MCF 10A (cell line): ENCODE measurements at regions of chr20 and their contacts with region 1.

Region 1: DNA sequence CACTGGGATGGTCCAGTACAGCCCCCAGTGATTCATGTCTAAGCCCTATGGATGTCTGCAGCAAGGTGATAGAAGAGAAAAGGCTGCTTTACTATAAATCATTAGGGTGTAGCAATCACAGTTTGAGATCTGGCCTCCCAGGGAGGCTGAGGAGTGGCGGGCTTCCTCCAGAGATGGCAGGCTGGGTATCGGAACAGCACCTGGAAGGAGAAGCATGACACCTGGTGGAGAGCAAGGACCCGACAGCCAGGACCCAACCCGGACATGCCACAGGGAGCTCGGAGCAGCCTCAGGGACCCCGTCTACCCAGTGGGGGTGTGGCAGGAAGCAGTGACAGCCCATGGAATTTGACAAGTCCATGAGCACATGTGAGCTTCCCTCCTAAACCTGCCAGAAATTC is 114.8 kb upstream of the CD93 start:
- DNase-seq: peak; percentile 79
- H3K4me3 Mint-ChIP-seq: no peak overlapping the region
- H3K27ac Mint-ChIP-seq: no peak overlapping the region
- H3K4me1 Mint-ChIP-seq: peaks cover 16% of the 10 kb centered on the region
- H3K27me3 Mint-ChIP-seq: no peaks in the 10 kb centered on the region
- CTCF ChIP-seq: peak; percentile 71

Region 2: GRCh38 chr20:23050847-23051631 is 149.9 kb before region 1 on chr20:
- CTCF ChIA-PET with region 1: interaction called, 9 read pairs
- POLR2A ChIA-PET with region 1: no interaction called
- intact Hi-C with region 1: loop called (anchors 1 kb)
- DNase-seq: peak; percentile 92
- H3K4me3 Mint-ChIP-seq: peak overlapping the region; percentile 74
- H3K27ac Mint-ChIP-seq: peak overlapping the region; percentile 92
- H3K4me1 Mint-ChIP-seq: peaks cover 17% of the 10 kb centered on the region
- H3K27me3 Mint-ChIP-seq: no peaks in the 10 kb centered on the region
- CTCF ChIP-seq: peak; percentile 78

Region 3: GRCh38 chr20:23115822-23116221 is 85.1 kb before region 1 on chr20:
- CTCF ChIA-PET with region 1: no interaction called
- POLR2A ChIA-PET with region 1: no interaction called
- intact Hi-C with region 1: no loop called
- DNase-seq: no peak
- H3K4me3 Mint-ChIP-seq: no peak overlapping the region
- H3K27ac Mint-ChIP-seq: no peak overlapping the region
- H3K4me1 Mint-ChIP-seq: peaks cover 13% of the 10 kb centered on the region
- H3K27me3 Mint-ChIP-seq: no peaks in the 10 kb centered on the region
- CTCF ChIP-seq: no peak

Region 4: GRCh38 chr20:23132930-23133559 is 67.9 kb before region 1 on chr20:
- CTCF ChIA-PET with region 1: interaction called, 12 read pairs
- POLR2A ChIA-PET with region 1: no interaction called
- intact Hi-C with region 1: no loop called
- DNase-seq: no peak
- H3K4me3 Mint-ChIP-seq: no peak overlapping the region
- H3K27ac Mint-ChIP-seq: no peak overlapping the region
- H3K4me1 Mint-ChIP-seq: peaks cover 27% of the 10 kb centered on the region
- H3K27me3 Mint-ChIP-seq: no peaks in the 10 kb centered on the region
- CTCF ChIP-seq: no peak

Region 5: GRCh38 chr20:23178806-23179205 is 22.1 kb before region 1 on chr20:
- CTCF ChIA-PET with region 1: interaction called, 11 read pairs
- POLR2A ChIA-PET with region 1: interaction called, 3 read pairs
- intact Hi-C with region 1: no loop called
- DNase-seq: no peak
- H3K4me3 Mint-ChIP-seq: no peak overlapping the region
- H3K27ac Mint-ChIP-seq: no peak overlapping the region
- H3K4me1 Mint-ChIP-seq: no peaks in the 10 kb centered on the region
- H3K27me3 Mint-ChIP-seq: no peaks in the 10 kb centered on the region
- CTCF ChIP-seq: no peak

Region 6: DNA sequence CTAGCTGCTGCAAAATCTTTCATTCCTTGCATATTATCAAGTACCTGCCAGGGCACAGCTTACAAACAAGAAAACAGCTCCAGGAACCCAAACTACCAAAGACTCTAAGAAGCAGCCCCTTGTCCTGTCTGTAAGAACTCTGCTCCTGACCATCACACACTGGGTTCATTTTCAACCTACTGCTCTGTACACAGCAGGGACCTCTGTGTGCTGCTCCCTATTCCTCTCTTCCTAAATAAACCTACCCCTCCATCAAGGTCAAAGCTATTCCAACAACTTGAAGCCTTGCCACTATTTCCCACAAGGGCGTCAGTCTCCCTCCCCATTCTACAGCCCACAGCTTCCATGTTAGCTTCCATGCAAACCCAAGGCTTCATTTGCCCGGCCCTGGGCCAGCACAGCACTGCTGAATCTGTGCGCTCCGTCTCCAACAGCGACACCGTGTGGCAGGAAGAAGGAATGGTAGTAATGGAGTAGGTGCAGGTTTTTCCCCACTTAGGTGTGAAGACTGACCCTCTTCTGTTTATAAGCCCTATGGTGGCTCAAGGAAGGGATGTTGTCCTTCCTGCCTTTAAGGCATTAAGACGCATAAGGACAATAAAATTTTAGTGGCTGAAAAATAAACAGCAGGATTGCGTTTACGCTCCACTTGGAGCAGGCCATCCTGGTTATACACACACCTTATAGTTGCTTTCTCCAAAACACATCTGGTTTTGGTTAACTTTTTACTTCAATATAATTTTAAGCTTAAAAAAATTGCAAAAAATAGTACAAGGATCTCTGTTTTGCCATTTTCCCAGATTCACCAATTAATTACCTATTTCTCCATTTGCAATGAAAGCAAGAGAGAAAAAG is 34.5 kb after region 1 on chr20:
- CTCF ChIA-PET with region 1: interaction called, 14 read pairs
- POLR2A ChIA-PET with region 1: no interaction called
- intact Hi-C with region 1: no loop called
- DNase-seq: peak; percentile 71
- H3K4me3 Mint-ChIP-seq: no peak overlapping the region
- H3K27ac Mint-ChIP-seq: no peak overlapping the region
- H3K4me1 Mint-ChIP-seq: peaks cover 16% of the 10 kb centered on the region
- H3K27me3 Mint-ChIP-seq: no peaks in the 10 kb centered on the region
- CTCF ChIP-seq: peak; percentile 73

Region 7: GRCh38 chr20:23420943-23421931 is 220.3 kb after region 1 on chr20 and contains the start of gene NAPB:
- CTCF ChIA-PET with region 1: no interaction called
- POLR2A ChIA-PET with region 1: no interaction called
- intact Hi-C with region 1: no loop called
- DNase-seq: peak; percentile 92
- H3K4me3 Mint-ChIP-seq: peak within 1 kb of the TSS; percentile 78
- H3K27ac Mint-ChIP-seq: peak within 1 kb of the TSS; percentile 90
- H3K4me1 Mint-ChIP-seq: peaks cover 9% of the 10 kb centered on the region
- H3K27me3 Mint-ChIP-seq: no peaks in the 10 kb centered on the region
- CTCF ChIP-seq: peak; percentile 39
- total RNA-seq, gene NAPB: 9.6 and 10.9 TPM in 2 replicates